Colonic mucosa (tissue), 4 donors: ENCODE measurements at regions of chr11 and their contacts with region 1.

Region 1: GRCh38 chr11:59822989-59823566 is 12.5 kb upstream of the MRPL16 start:
- DNase-seq: peak; percentile 50
- H3K4me3 ChIP-seq: no peak overlapping the region
- H3K27ac ChIP-seq: no peak overlapping the region
- H3K4me1 ChIP-seq: no peaks in the 10 kb centered on the region
- H3K27me3 ChIP-seq: no peaks in the 10 kb centered on the region
- CTCF ChIP-seq: peak; percentile 56

Region 2: DNA sequence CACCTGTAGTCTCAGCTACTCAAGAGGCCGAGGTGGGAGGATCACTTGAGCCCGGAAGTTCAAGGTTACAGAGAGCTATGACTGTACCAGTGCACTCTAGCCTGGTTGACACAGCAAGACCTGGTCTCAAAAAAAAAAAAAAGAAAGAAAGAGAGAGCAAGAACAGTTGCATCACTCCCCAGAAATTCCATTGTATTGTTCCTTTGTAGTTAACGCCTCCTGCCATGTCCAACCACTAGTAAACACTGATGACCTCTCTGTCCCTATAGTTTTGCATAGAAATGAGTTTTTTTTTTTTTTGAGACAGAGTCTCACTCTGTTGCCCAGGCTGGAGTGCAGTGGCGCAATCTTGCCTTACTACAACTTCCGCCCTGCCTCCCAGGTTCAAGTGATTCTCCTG is 165.0 kb before region 1 on chr11:
- intact Hi-C with region 1: no loop called
- DNase-seq: no peak
- H3K4me3 ChIP-seq: no peak overlapping the region
- H3K27ac ChIP-seq: no peak overlapping the region
- H3K4me1 ChIP-seq: no peaks in the 10 kb centered on the region
- H3K27me3 ChIP-seq: no peaks in the 10 kb centered on the region
- CTCF ChIP-seq: no peak

Region 3: GRCh38 chr11:59767225-59767611 is 55.9 kb before region 1 on chr11:
- intact Hi-C with region 1: no loop called
- DNase-seq: peak; percentile 38
- H3K4me3 ChIP-seq: no peak overlapping the region
- H3K27ac ChIP-seq: no peak overlapping the region
- H3K4me1 ChIP-seq: peaks cover 17% of the 10 kb centered on the region
- H3K27me3 ChIP-seq: no peaks in the 10 kb centered on the region
- CTCF ChIP-seq: no peak

Region 4: DNA sequence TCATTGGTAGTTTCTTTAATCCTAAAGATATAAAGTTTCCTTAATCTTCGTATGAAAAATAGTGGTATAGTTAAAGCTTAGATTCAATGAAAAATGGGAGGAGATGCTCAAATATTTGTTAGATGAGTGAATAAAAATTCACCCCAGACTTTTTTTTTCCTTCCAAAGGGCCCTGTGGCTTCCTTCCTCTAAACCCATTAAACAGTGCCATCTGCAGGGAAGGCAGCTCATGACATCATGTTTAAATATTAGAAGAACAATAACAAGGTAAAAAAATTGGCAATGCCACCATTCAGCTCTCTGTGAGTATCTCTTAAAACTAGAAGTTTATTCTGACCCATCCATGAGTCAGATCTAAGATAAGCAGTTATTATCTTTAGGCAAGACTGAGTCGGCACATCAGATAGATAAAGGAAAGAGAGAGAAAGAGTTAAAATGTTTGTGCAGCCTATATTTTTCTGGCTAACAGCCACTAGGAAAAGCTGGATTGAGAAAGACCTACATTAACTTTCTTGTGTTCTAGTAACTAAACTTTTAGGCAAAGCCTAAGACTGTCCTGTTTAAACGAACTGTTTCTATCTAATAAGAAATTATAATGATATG is 96.0 kb after region 1 on chr11:
- intact Hi-C with region 1: loop called (anchors 2 kb)
- DNase-seq: peak; percentile 56
- H3K4me3 ChIP-seq: no peak overlapping the region
- H3K27ac ChIP-seq: no peak overlapping the region
- H3K4me1 ChIP-seq: no peaks in the 10 kb centered on the region
- H3K27me3 ChIP-seq: no peaks in the 10 kb centered on the region
- CTCF ChIP-seq: peak; percentile 26

Region 5: DNA sequence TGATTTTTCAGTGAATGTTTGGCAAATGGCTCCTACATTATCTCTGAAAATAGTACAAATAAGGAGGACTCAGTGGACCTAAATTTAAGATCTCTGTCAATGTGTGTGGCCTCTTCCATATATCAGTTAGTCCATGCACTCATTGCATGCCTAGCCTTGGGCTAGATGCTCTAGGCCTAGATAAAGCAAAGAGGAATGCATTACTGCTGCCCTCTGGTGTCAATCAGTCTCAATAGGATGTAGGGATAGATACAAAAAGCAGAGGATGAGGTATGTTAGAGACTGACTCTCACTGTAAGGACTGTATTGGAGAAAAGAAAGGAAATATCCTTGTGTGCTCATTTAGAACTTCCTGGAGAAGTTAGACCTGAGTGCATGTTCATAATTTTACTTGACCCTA is 307.4 kb after region 1 on chr11:
- intact Hi-C with region 1: loop called (anchors 5 kb)
- DNase-seq: peak; percentile 60
- H3K4me3 ChIP-seq: no peak overlapping the region
- H3K27ac ChIP-seq: no peak overlapping the region
- H3K4me1 ChIP-seq: no peaks in the 10 kb centered on the region
- H3K27me3 ChIP-seq: no peaks in the 10 kb centered on the region
- CTCF ChIP-seq: peak; percentile 32

Region 6: DNA sequence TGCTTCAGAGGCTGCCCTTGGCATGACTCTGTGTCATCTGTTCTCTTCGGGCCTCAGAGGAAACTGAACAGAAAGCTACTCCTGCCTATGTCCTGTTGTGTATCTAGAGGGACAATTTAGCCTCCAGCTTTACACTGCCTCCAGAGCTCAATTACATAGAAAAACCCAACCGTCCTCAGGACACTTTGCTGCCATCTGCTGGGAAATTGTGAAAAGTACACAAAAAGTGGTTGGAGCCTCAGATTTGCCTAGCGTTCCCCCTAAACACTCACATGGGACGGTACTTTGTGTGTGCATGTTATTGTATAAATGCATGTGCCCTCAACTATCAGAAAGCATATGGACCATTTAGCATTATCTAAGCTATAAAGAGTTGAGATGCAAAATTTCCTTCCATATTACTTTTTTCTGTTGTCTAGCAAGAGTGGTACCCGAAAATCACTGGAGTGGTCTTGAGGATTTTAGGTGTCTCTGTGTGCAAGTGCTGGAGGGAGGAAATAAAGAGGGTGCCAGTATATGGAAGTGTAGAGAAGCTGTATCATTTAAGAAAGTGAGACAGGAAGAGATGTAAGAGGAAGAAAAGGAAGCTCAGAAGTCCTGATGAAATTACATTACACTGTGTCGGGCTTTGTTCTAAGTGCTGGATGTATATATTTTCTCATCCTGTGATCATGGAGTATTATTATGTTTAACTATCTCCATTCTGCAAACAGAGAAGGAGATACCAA is 428.6 kb after region 1 on chr11:
- intact Hi-C with region 1: loop called (anchors 5 kb)
- DNase-seq: no peak
- H3K4me3 ChIP-seq: no peak overlapping the region
- H3K27ac ChIP-seq: no peak overlapping the region
- H3K4me1 ChIP-seq: no peaks in the 10 kb centered on the region
- H3K27me3 ChIP-seq: no peaks in the 10 kb centered on the region
- CTCF ChIP-seq: peak; percentile 42